ENCODE measurements at regions of chr2 and their contacts with region 1.

Region 1: DNA sequence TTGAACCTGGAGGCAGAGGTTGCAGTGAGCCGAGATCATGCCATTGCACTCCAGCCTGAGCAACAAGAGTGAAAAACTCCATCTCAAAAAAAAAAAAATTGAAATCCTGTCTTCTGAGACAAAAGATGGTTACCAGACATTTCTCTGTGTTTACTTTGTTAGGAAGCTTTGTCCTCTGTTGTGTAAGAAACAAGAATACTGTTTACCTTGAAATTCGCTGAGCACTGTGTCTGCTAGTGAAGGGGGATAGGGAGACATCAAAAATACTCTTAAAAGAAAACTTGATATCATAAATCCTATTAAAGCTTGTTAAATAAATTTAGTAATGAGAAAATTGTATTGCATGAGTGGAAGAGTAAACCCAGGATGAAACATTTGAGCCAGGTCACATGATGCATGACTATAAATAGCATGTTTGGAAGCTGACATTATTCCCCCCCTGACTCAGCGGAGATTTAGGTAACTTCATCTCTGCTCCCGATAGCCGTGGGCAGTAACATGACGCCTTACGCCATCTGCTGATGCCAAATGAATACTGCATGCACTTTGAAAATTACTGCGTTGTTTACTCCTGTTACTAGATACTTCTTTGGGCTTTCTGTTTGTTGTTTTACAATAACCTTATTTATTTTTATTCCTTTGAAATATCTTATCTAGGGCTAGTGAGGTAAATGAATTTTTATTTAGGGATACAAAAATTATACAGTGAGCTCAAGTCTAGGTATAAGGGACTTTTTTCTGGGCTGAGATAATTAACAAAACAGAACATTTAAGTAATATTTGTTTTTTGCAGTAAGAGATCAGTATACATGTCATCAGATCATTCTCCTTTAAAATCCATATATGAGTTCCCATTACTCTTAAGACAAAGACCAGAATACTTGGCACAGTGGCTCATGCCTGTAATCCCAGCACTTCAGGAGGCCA is 134.9 kb downstream of the MAP3K20 start:
- DNase-seq: no peak
- ATAC-seq: peak; percentile 73
- H3K4me3 Mint-ChIP-seq: no peak overlapping the region
- H3K27ac Mint-ChIP-seq: no peak overlapping the region
- H3K4me1 Mint-ChIP-seq: peaks cover 5% of the 10 kb centered on the region
- H3K27me3 Mint-ChIP-seq: no peaks in the 10 kb centered on the region
- CTCF ChIP-seq: peak; percentile 72

Region 2: GRCh38 chr2:172806493-172806892 is 404.0 kb before region 1 on chr2:
- CTCF ChIA-PET with region 1: no interaction called
- POLR2A ChIA-PET with region 1: no interaction called
- intact Hi-C with region 1: loop called (anchors 1 kb)
- DNase-seq: no peak
- ATAC-seq: no peak
- H3K4me3 Mint-ChIP-seq: no peak overlapping the region
- H3K27ac Mint-ChIP-seq: no peak overlapping the region
- H3K4me1 Mint-ChIP-seq: no peaks in the 10 kb centered on the region
- H3K27me3 Mint-ChIP-seq: peaks cover 12% of the 10 kb centered on the region
- CTCF ChIP-seq: no peak

Region 3: DNA sequence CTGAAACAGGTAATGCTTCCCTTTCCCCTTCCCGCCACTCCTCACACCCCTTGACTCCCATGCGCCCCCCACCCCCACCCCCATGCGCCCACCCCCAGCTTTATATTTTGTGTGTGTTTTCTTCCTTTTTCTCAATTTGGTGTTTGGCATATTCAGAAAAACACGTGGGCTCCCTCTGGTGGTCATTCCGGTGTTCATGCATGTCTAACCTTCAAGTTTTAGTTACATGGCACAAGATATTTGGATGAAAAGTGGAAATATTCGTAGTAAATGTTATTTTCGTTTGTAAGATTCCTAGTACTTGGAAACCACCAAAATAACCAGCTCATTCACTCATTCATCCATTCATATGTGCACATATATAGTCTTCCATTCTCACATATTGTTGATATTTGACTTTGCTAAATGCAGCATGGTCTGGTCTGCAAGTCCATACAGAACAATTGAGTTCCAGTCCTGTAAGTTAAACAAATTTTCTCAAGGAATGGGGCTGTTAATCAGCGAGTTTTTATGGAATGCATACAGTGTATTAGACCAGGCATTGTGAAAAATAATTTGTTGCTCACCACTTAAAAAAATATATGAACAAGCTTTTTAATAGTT is 278.5 kb before region 1 on chr2:
- CTCF ChIA-PET with region 1: no interaction called
- POLR2A ChIA-PET with region 1: no interaction called
- intact Hi-C with region 1: no loop called
- DNase-seq: no peak
- ATAC-seq: no peak
- H3K4me3 Mint-ChIP-seq: no peak overlapping the region
- H3K27ac Mint-ChIP-seq: no peak overlapping the region
- H3K4me1 Mint-ChIP-seq: no peaks in the 10 kb centered on the region
- H3K27me3 Mint-ChIP-seq: peaks cover 18% of the 10 kb centered on the region
- CTCF ChIP-seq: no peak

Region 4: GRCh38 chr2:173027181-173028128 is 183.1 kb before region 1 on chr2:
- CTCF ChIA-PET with region 1: interaction called, 188 read pairs
- POLR2A ChIA-PET with region 1: no interaction called
- intact Hi-C with region 1: loop called (anchors 1 kb)
- DNase-seq: no peak
- ATAC-seq: peak; percentile 67
- H3K4me3 Mint-ChIP-seq: no peak overlapping the region
- H3K27ac Mint-ChIP-seq: no peak overlapping the region
- H3K4me1 Mint-ChIP-seq: peaks cover 4% of the 10 kb centered on the region
- H3K27me3 Mint-ChIP-seq: peaks cover 8% of the 10 kb centered on the region
- CTCF ChIP-seq: peak; percentile 47

Region 5: DNA sequence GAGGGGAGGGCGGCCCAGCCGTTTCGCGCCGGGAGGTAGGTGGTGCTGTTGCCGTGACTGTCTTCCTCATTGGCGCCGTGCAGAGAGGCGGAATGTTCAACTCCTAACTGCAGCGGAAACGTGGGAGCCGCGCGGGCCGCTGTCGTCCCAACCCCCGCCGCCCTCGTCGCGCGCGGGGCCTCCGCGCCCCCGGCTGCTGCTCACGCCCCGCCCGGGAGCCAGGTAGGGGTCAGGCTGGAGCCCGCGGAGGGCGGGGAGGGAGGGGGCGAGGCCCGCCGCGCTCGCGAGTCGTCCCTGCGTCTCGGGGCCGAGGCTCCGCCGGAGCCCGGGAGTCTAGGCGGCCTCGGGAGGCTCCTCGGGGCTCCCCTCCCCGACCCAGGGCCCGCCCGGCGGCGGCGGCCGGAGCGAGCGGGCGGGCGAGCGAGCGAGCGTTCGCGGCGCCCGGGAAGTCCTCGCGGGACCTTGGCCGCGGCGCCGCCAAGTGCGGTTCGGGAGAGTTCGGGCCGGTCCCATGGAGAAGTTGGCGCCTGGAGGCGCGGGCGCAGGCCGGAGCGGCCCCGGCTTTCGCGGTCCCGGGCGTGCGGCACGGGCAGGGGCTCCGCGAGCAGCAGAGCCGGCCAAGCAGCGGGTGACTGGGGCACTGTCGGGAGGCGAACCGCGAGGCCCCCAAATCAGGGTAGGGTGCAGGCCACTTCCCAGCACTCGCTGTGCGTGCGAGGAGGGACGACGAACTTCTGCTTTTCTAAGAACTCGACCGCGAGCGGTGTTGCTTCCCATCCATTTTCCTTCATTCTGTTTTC is 134.6 kb before region 1 on chr2 and contains the start of gene MAP3K20:
- CTCF ChIA-PET with region 1: interaction called, 4 read pairs
- POLR2A ChIA-PET with region 1: no interaction called
- intact Hi-C with region 1: loop called (anchors 2 kb)
- DNase-seq: peak; percentile 42
- ATAC-seq: peak; percentile 68
- H3K4me3 Mint-ChIP-seq: peak within 1 kb of the TSS; percentile 89
- H3K27ac Mint-ChIP-seq: peak within 1 kb of the TSS; percentile 80
- H3K4me1 Mint-ChIP-seq: peaks cover 13% of the 10 kb centered on the region
- H3K27me3 Mint-ChIP-seq: peaks cover 4% of the 10 kb centered on the region
- CTCF ChIP-seq: no peak
- total RNA-seq, gene MAP3K20: 8.7 and 9.5 TPM in 2 replicates

Region 6: GRCh38 chr2:173171924-173172643 is 38.4 kb before region 1 on chr2:
- CTCF ChIA-PET with region 1: no interaction called
- POLR2A ChIA-PET with region 1: no interaction called
- intact Hi-C with region 1: no loop called
- DNase-seq: no peak
- ATAC-seq: no peak
- H3K4me3 Mint-ChIP-seq: no peak overlapping the region
- H3K27ac Mint-ChIP-seq: no peak overlapping the region
- H3K4me1 Mint-ChIP-seq: no peaks in the 10 kb centered on the region
- H3K27me3 Mint-ChIP-seq: no peaks in the 10 kb centered on the region
- CTCF ChIP-seq: no peak

Region 7: DNA sequence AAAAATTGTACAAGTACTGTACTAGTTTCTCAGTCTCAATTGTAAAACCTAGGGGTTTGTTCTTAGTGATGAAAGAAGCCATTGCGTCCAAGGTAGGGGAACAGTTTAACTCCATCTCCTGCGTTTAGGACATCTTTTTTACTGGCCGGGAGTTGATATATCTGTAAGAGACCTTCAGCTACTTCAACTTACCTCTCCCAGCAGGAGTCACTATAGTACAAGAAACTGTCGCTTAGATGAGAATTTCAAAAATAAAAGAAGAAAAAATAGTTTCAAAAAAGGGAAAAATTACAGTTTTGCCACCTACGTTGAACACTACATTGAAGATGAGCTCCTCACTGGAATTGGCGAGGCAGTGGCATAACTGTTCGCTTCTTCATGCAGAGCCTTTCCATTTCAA is 12.2 kb before region 1 on chr2:
- CTCF ChIA-PET with region 1: interaction called, 10 read pairs
- POLR2A ChIA-PET with region 1: no interaction called
- intact Hi-C with region 1: no loop called
- DNase-seq: no peak
- ATAC-seq: no peak
- H3K4me3 Mint-ChIP-seq: no peak overlapping the region
- H3K27ac Mint-ChIP-seq: no peak overlapping the region
- H3K4me1 Mint-ChIP-seq: no peaks in the 10 kb centered on the region
- H3K27me3 Mint-ChIP-seq: no peaks in the 10 kb centered on the region
- CTCF ChIP-seq: no peak

Measured in activated B cell treated with CpG ODN at 0.5 μM for 24 hours (primary cell).